ENCODE measurements at regions of chr6 and their contacts with region 1.

Region 1: GRCh38 chr6:28683944-28684538 is 158.4 kb downstream of the GPX5 start:
- DNase-seq: peak in 6 of 14 experiments; percentile 0 to 65 (median 33)
- ATAC-seq: peak; percentile 69
- H3K4me3 ChIP-seq: no peak overlapping the region
- H3K4me3 Mint-ChIP-seq: no peak overlapping the region
- H3K27ac ChIP-seq: no peak overlapping the region
- H3K27ac Mint-ChIP-seq: no peak overlapping the region
- H3K4me1 ChIP-seq: peaks cover 4% of the 10 kb centered on the region
- H3K4me1 Mint-ChIP-seq: peaks cover 12% of the 10 kb centered on the region
- H3K27me3 ChIP-seq: peaks cover 21 to 48% of the 10 kb centered on the region in 2 experiments
- H3K27me3 Mint-ChIP-seq: peaks cover 87% of the 10 kb centered on the region
- CTCF ChIP-seq: peak; percentile 65

Region 2: GRCh38 chr6:28393911-28394662 is 290.0 kb before region 1 on chr6:
- CTCF ChIA-PET with region 1: no interaction called
- POLR2A ChIA-PET with region 1: no interaction called
- intact Hi-C with region 1: loop called in 1 of 2 experiments (anchors 5 kb)
- DNase-seq: peak in 2 of 14 experiments; percentile 3 to 23
- ATAC-seq: no peak
- H3K4me3 ChIP-seq: no peak overlapping the region
- H3K4me3 Mint-ChIP-seq: no peak overlapping the region
- H3K27ac ChIP-seq: no peak overlapping the region
- H3K27ac Mint-ChIP-seq: no peak overlapping the region
- H3K4me1 ChIP-seq: peaks cover 14% of the 10 kb centered on the region
- H3K4me1 Mint-ChIP-seq: peaks cover 50% of the 10 kb centered on the region
- H3K27me3 ChIP-seq: no peaks in the 10 kb centered on the region
- H3K27me3 Mint-ChIP-seq: no peaks in the 10 kb centered on the region
- CTCF ChIP-seq: peak; percentile 21

Region 3: DNA sequence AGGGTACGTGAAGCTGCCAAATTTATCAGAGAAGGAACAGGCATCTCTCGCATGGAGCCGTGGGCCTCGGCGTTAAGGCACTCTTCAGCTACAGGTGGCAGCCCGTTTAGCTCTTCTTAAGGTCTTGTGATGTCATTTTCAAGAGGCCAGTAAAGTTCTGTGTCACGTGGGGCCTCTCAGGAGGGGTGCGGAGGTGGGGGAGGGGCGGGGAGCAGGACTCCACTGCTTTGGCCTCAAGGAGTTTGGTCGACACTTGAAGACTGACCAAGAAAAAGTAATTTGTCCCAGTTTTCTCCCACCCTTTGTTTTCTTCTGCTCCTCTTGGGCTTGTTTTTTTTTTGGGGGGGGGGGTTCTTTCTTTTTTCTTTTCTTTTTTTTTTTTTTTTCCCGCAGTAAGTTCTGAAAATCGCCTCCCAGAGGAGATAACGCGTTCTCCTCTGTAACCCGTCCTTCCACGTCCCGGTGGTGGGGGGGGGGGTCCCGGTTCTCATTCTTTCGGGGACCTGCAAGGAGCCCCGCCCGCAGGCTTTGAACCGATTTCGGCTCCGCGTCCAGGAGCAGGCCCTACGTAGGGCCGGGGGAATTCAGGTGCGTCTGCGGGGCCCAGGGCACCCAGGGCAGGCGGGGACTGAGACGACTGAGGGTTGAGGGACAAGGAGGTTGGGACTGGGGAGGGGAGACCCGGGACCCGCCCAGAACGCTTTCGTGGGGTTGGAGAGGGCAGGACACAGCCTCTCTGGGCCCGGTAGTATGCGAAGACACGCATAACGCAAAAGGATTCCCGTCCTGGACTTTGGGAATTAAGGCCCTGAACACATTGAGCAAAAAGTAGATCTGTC is 194.5 kb before region 1 on chr6:
- CTCF ChIA-PET with region 1: no interaction called
- POLR2A ChIA-PET with region 1: no interaction called
- intact Hi-C with region 1: loop called in 1 of 2 experiments (anchors 2 kb)
- DNase-seq: peak in 12 of 14 experiments; percentile 2 to 65 (median 30)
- ATAC-seq: peak; percentile 66
- H3K4me3 ChIP-seq: peak overlapping the region; percentile 52
- H3K4me3 Mint-ChIP-seq: peak overlapping the region; percentile 90
- H3K27ac ChIP-seq: peak overlapping the region in 1 of 2 donors; percentile 44
- H3K27ac Mint-ChIP-seq: peak overlapping the region; percentile 92
- H3K4me1 ChIP-seq: peaks cover 17% of the 10 kb centered on the region
- H3K4me1 Mint-ChIP-seq: peaks cover 26% of the 10 kb centered on the region
- H3K27me3 ChIP-seq: peaks cover 23 to 54% of the 10 kb centered on the region in 2 experiments
- H3K27me3 Mint-ChIP-seq: peaks cover 85% of the 10 kb centered on the region
- CTCF ChIP-seq: no peak

Region 4: GRCh38 chr6:28496099-28496779 is 187.8 kb before region 1 on chr6:
- CTCF ChIA-PET with region 1: no interaction called
- POLR2A ChIA-PET with region 1: no interaction called
- intact Hi-C with region 1: loop called (anchors 2 kb)
- DNase-seq: peak in 2 of 14 experiments; percentile 22 to 27
- ATAC-seq: no peak
- H3K4me3 ChIP-seq: no peak overlapping the region
- H3K4me3 Mint-ChIP-seq: no peak overlapping the region
- H3K27ac ChIP-seq: no peak overlapping the region
- H3K27ac Mint-ChIP-seq: no peak overlapping the region
- H3K4me1 ChIP-seq: no peaks in the 10 kb centered on the region
- H3K4me1 Mint-ChIP-seq: no peaks in the 10 kb centered on the region
- H3K27me3 ChIP-seq: peaks cover 7 to 15% of the 10 kb centered on the region in 2 experiments
- H3K27me3 Mint-ChIP-seq: peaks cover 55% of the 10 kb centered on the region
- CTCF ChIP-seq: peak; percentile 47

Region 5: GRCh38 chr6:28988536-28989311 is 304.7 kb after region 1 on chr6:
- CTCF ChIA-PET with region 1: no interaction called
- POLR2A ChIA-PET with region 1: no interaction called
- intact Hi-C with region 1: loop called in 1 of 2 experiments (anchors 1 kb)
- DNase-seq: peak; percentile 49 to 90 (median 70)
- ATAC-seq: peak; percentile 90
- H3K4me3 ChIP-seq: peak overlapping the region; percentile 38
- H3K4me3 Mint-ChIP-seq: peak overlapping the region; percentile 89
- H3K27ac ChIP-seq: no peak overlapping the region
- H3K27ac Mint-ChIP-seq: peak overlapping the region; percentile 84
- H3K4me1 ChIP-seq: peaks cover 17% of the 10 kb centered on the region
- H3K4me1 Mint-ChIP-seq: peaks cover 35% of the 10 kb centered on the region
- H3K27me3 ChIP-seq: peaks cover 0 to 13% of the 10 kb centered on the region in 2 experiments
- H3K27me3 Mint-ChIP-seq: peaks cover 50% of the 10 kb centered on the region
- CTCF ChIP-seq: peak; percentile 51

Region 6: DNA sequence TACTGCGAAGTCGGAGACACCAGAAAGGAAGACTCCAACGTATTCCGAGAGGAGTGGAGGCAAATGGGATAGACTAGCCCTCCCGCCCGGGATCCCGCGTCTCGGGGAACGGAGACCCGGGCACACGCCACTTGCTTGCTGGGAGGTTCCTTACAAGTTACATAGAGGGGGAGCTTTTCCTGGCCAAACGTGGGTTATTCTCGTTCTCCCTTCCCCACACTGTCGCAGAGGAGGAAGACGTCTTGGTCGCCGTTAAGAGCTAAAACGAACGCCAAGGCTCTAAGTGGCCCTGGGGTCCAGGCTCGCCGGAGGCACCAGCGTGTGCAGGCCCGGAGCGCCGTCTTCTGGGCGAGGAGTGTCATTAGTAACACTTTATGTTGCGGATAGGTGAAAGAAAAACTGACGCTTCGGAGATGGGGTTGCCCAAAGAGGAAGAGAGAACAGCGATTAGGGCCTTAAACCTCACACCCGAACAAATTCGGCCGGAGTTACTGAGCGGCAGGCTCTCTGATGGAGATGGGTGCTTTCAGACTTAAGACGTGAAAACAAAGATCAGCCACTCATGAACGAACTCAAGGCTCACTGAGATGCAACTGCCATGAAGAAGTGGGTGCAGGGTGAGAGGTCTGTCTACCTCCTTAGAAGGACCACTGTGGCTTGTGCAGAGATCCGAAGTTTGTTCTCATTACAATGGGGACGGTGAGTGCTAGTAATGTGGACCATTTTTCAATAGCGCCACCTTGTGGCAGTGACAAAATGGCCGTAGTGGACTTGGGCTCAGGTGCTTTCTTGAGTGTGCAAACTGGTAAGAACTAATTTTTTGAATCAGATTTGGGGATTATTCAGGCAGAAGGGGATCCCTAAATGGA is 332.8 kb after region 1 on chr6:
- CTCF ChIA-PET with region 1: interaction called, 3 read pairs
- POLR2A ChIA-PET with region 1: interaction called, 3 read pairs
- intact Hi-C with region 1: loop called (anchors 1 kb)
- DNase-seq: peak; percentile 71 to 91 (median 80)
- ATAC-seq: peak; percentile 66
- H3K4me3 ChIP-seq: peak overlapping the region; percentile 55
- H3K4me3 Mint-ChIP-seq: peak overlapping the region; percentile 87
- H3K27ac ChIP-seq: no peak overlapping the region
- H3K27ac Mint-ChIP-seq: peak overlapping the region; percentile 50
- H3K4me1 ChIP-seq: peaks cover 21% of the 10 kb centered on the region
- H3K4me1 Mint-ChIP-seq: peaks cover 16% of the 10 kb centered on the region
- H3K27me3 ChIP-seq: peaks cover 13 to 24% of the 10 kb centered on the region in 2 experiments
- H3K27me3 Mint-ChIP-seq: peaks cover 42% of the 10 kb centered on the region
- CTCF ChIP-seq: peak; percentile 95

Region 7: DNA sequence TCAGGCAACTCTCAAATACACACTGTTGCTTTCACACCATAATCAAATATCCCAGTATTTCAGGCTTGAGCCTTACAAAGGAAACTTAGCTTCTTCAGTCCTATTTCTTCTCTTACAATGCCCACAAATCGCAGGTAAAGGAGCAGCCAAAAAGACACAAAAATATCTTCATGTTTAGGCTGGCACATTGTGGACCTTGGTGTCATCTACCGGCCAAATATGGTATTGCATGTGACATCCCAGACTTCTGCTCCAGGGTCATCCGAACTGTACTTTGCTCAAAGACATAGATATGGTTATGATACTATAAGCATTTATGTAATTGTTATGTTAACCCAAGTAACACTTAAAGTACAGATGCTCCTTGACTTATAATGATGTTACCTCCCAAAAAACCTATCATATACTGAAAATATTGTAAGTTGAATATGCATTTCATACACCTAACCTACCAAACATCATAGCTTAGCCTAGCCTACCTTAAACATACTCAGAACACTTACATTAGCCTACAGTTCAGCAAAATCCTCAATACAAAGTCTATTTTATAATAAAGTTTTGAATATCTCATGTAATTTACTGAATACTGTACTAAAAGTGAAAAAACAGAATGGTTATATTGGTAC is 905.5 kb after region 1 on chr6:
- CTCF ChIA-PET with region 1: no interaction called
- POLR2A ChIA-PET with region 1: no interaction called
- intact Hi-C with region 1: loop called (anchors 1 to 2 kb)
- DNase-seq: peak; percentile 28 to 77 (median 39)
- ATAC-seq: peak; percentile 85
- H3K4me3 ChIP-seq: no peak overlapping the region
- H3K4me3 Mint-ChIP-seq: no peak overlapping the region
- H3K27ac ChIP-seq: no peak overlapping the region
- H3K27ac Mint-ChIP-seq: no peak overlapping the region
- H3K4me1 ChIP-seq: no peaks in the 10 kb centered on the region
- H3K4me1 Mint-ChIP-seq: no peaks in the 10 kb centered on the region
- H3K27me3 ChIP-seq: peaks cover 3 to 11% of the 10 kb centered on the region in 2 experiments
- H3K27me3 Mint-ChIP-seq: peaks cover 33% of the 10 kb centered on the region
- CTCF ChIP-seq: peak; percentile 99

Measured in CD4-positive, alpha-beta T cell (primary cell).